ENCODE measurements at regions of chr16 and their contacts with region 1.

Region 1: DNA sequence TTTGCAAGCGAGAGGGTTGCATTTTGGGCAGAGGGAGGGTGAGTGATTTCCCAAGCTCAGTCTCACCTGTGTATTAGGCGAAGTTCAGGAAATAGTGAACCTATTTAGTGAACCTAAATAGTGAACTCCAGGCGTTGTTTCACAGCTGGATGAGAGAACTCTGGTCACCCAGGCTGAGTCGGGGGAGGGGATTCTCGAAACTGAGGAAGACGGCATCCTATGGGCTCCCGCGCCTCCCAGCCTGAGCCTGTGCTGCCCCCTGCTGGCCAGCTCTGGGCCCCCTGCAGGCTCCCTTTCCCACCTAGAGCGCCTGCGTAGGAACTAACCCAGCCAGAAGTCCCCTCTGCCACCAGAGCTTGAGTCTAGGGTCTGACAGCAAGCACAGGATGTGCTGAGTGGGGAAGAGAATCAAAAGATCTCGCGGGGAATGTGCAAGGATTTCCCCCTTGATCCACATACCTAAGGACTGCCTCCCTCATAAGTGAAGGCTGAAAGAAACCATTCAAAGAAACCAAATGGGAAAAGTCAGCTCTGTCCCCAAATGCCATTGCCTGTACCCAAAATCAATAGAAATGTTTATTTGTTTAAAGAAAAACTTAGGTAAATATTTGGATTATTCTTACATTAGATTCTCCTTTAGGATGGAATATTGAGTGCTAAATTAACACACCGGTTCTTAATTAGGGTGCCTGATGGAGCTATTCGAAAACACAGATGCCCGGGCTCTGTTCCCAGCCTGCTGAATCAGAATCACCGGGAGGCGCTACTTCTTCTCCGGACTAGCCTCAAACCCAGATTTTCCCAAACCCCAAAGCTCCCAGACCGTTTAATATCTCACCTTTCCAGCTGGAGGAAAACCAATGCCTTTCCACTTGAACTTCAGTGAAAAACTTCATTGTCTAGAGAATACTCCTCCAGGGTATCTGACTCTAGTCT is 14.8 kb upstream of the MARVELD3 start:
- DNase-seq: peak; percentile 93
- ATAC-seq: peak; percentile 95
- H3K4me3 Mint-ChIP-seq: peak overlapping the region; percentile 37; the same call in 1 of the 2 replicates
- H3K27ac Mint-ChIP-seq: no peak overlapping the region
- H3K4me1 Mint-ChIP-seq: peaks cover 3% of the 10 kb centered on the region; the same call in 1 of the 2 replicates
- H3K27me3 Mint-ChIP-seq: no peaks in the 10 kb centered on the region; the same call in 1 of the 2 replicates
- CTCF ChIP-seq: peak; percentile 93

Region 2: GRCh38 chr16:70481929-70482536 is 1129.2 kb before region 1 on chr16:
- CTCF ChIA-PET with region 1: no interaction called
- POLR2A ChIA-PET with region 1: no interaction called
- DNase-seq: no peak
- ATAC-seq: no peak
- H3K4me3 Mint-ChIP-seq: no peak overlapping the region
- H3K27ac Mint-ChIP-seq: no peak overlapping the region
- H3K4me1 Mint-ChIP-seq: 0 out of 2 replicates have a peak, but pooled peaks cover 3% of the 10 kb centered on the region
- H3K27me3 Mint-ChIP-seq: no peaks in the 10 kb centered on the region
- CTCF ChIP-seq: no peak

Region 3: DNA sequence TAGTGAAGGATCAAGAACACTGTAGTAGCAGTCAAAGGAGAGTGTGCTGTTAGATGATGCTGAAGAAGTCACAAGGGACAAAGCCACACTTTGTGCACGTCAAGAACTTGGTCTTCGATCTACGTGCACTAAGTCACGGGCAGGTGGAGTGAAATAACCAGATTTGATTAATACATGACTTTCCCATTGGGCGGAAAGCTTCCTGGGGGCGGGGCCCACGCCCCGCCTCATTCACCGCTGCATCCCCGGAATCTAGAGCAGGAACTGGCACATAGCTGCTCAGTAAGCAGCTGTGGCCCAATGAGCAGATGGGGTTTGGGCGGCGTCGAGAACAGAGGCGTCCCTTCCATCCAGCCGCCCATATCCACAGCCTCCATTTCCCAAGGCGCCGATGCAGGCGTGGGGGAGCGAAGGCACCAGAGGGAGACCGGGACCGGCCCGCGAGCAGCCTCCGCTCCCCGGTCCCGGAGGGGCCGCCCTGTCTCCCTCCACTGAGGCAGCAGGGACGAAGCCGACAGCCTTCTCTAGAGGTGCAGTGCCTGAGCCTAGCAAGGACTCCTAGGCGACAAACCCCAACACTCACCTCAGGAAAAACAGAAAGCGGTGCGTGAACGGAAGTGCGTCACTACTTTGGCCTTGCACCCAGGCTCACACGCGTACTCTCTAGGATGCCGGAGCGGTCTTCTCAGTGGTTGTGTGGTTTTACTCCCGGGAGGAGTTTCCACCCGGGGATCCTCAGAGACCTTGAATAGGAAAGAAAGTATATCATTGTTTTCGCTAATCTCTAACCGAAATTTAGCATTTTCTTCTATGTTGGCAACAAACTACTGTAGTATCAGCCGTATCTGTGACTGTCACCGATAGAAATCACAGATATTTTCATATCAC is 127.0 kb before region 1 on chr16:
- CTCF ChIA-PET with region 1: interaction called, 19 read pairs
- POLR2A ChIA-PET with region 1: no interaction called
- DNase-seq: peak; percentile 69
- ATAC-seq: peak; percentile 93
- H3K4me3 Mint-ChIP-seq: peak overlapping the region; percentile 79
- H3K27ac Mint-ChIP-seq: peak overlapping the region; percentile 94
- H3K4me1 Mint-ChIP-seq: peaks cover 13% of the 10 kb centered on the region
- H3K27me3 Mint-ChIP-seq: peaks cover 4% of the 10 kb centered on the region
- CTCF ChIP-seq: no peak

Region 4: GRCh38 chr16:71537643-71538042 is 73.6 kb before region 1 on chr16:
- CTCF ChIA-PET with region 1: interaction called, 35 read pairs
- POLR2A ChIA-PET with region 1: no interaction called
- DNase-seq: peak; percentile 66
- ATAC-seq: peak; percentile 87
- H3K4me3 Mint-ChIP-seq: no peak overlapping the region
- H3K27ac Mint-ChIP-seq: no peak overlapping the region
- H3K4me1 Mint-ChIP-seq: peaks cover 4% of the 10 kb centered on the region; the same call in 1 of the 2 replicates
- H3K27me3 Mint-ChIP-seq: no peaks in the 10 kb centered on the region
- CTCF ChIP-seq: peak; percentile 51; the same call in 1 of the 2 replicates

Region 5: DNA sequence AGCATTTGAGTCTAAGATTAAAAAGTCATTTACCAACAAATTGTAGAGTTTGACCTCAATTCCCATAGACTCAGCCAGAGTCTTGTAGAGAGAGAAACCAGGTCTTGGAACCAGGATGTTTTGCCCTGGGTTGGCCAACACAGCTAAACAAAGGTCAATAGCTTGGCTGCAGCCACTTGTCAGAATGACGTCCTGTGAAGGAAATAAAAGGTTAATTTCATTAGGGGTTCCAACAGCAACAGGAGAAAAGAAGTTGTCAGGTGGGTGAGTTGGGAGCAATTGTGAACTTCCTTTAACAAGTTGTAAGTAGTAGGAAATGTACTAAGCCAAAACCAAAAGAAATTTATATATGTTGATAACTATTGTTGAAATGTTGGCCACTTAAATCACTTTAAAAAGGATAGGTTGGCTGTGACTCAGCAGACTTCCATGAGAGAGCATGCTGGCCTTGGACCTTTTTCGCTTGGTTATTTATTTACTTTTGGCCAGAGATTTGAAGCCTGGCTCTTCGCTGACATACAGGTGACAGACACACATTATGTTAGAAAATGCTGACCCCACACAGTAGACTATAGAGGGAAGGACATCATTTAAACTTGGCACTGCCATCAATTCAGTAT is 38.6 kb before region 1 on chr16:
- CTCF ChIA-PET with region 1: interaction called, 20 read pairs
- POLR2A ChIA-PET with region 1: interaction called, 4 read pairs
- DNase-seq: no peak
- ATAC-seq: no peak
- H3K4me3 Mint-ChIP-seq: no peak overlapping the region
- H3K27ac Mint-ChIP-seq: no peak overlapping the region
- H3K4me1 Mint-ChIP-seq: no peaks in the 10 kb centered on the region
- H3K27me3 Mint-ChIP-seq: peaks cover 24% of the 10 kb centered on the region
- CTCF ChIP-seq: no peak

Region 6: DNA sequence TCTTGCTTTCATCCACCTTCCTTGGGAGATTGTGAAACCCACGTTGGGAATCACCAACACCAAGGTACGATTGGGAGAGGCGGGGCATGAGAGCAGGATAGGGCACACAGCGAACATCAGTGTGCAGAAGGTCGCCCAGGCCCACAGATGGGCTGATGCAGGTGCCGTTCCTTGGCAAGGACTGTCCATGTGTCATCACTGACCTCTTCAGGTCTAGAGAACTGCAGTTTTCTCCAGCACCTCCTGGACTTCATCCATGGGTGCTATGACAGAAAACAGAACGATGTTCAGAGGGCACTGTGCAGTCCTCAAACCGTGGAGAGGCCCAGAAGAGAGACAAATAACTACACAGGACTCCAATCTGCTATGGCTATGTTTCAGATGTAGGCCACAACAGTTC is 10.4 kb before region 1 on chr16:
- CTCF ChIA-PET with region 1: interaction called, 11 read pairs
- POLR2A ChIA-PET with region 1: no interaction called
- DNase-seq: no peak
- ATAC-seq: no peak
- H3K4me3 Mint-ChIP-seq: no peak overlapping the region
- H3K27ac Mint-ChIP-seq: no peak overlapping the region
- H3K4me1 Mint-ChIP-seq: peaks cover 5% of the 10 kb centered on the region; the same call in 1 of the 2 replicates
- H3K27me3 Mint-ChIP-seq: peaks cover 7% of the 10 kb centered on the region; the same call in 1 of the 2 replicates
- CTCF ChIP-seq: no peak

Region 7: DNA sequence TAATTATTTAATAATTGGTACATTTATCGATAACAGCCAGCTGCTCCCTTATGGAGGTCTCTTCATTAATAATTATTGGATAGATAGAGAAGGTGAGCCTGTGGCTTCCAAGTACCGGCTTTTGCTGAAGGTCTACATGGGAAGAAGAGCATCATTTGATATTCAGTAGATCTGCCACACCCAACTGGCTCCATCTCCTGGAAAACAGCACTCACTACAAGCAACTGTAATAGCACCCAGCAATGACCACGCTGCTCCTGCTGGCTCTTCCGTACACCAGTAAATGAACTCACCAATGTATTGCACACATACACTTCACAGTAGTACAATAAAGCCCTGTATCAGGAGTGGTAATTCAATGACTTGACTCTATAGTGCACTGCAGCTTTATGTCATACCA is 34.2 kb after region 1 on chr16:
- CTCF ChIA-PET with region 1: interaction called, 13 read pairs
- POLR2A ChIA-PET with region 1: no interaction called
- DNase-seq: no peak
- ATAC-seq: peak; percentile 81
- H3K4me3 Mint-ChIP-seq: no peak overlapping the region
- H3K27ac Mint-ChIP-seq: 0 out of 2 replicates have a peak overlapping the region, but pooled peaks have one; percentile 2
- H3K4me1 Mint-ChIP-seq: peaks cover 6% of the 10 kb centered on the region
- H3K27me3 Mint-ChIP-seq: no peaks in the 10 kb centered on the region
- CTCF ChIP-seq: no peak; the same call in 1 of the 2 replicates

Region 8: DNA sequence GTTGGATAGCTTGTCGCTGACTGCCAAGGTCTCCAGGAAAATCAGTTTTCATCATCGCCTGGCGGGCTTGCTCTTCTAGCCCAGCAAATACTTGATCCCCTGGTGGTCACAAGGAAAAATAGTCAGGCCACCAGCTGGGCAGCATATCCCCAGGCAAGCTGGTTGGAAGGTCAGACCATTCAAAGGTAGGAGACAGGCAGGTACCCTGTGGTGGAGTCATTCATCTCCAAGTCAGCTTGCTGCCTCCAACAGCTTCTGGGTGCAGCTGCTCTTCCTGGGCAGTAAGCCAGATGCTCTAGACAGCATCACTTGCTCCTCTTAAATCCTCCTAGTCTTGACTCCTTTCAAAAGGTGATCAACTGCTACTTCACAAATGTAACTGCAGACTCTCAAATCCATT is 256.7 kb after region 1 on chr16:
- CTCF ChIA-PET with region 1: no interaction called
- POLR2A ChIA-PET with region 1: no interaction called
- DNase-seq: no peak
- ATAC-seq: peak; percentile 57
- H3K4me3 Mint-ChIP-seq: no peak overlapping the region
- H3K27ac Mint-ChIP-seq: peak overlapping the region; percentile 75
- H3K4me1 Mint-ChIP-seq: peaks cover 10% of the 10 kb centered on the region
- H3K27me3 Mint-ChIP-seq: no peaks in the 10 kb centered on the region
- CTCF ChIP-seq: no peak